ENCODE measurements at regions of chr16 and their contacts with region 1.

Region 1: GRCh38 chr16:69773260-69773947 is 11.3 kb downstream of the WWP2 start:
- DNase-seq: no peak
- ATAC-seq: no peak
- H3K4me3 ChIP-seq: no peak overlapping the region
- H3K4me3 Mint-ChIP-seq: no peak overlapping the region
- H3K27ac ChIP-seq: no peak overlapping the region
- H3K27ac Mint-ChIP-seq: peak overlapping the region; percentile 41
- H3K4me1 ChIP-seq: peaks cover 8% of the 10 kb centered on the region
- H3K4me1 Mint-ChIP-seq: peaks cover 47% of the 10 kb centered on the region
- H3K27me3 ChIP-seq: no peaks in the 10 kb centered on the region
- H3K27me3 Mint-ChIP-seq: no peaks in the 10 kb centered on the region
- CTCF ChIP-seq: no peak

Region 2: GRCh38 chr16:69796351-69797118 is 23.1 kb after region 1 on chr16:
- CTCF ChIA-PET with region 1: interaction called, 10 read pairs
- POLR2A ChIA-PET with region 1: interaction called, 3 read pairs
- intact Hi-C with region 1: no loop called
- DNase-seq: peak in 4 of 9 experiments; percentile 16 to 64 (median 37)
- ATAC-seq: peak; percentile 66
- H3K4me3 ChIP-seq: no peak overlapping the region
- H3K4me3 Mint-ChIP-seq: no peak overlapping the region
- H3K27ac ChIP-seq: no peak overlapping the region
- H3K27ac Mint-ChIP-seq: no peak overlapping the region
- H3K4me1 ChIP-seq: no peaks in the 10 kb centered on the region
- H3K4me1 Mint-ChIP-seq: peaks cover 3% of the 10 kb centered on the region
- H3K27me3 ChIP-seq: no peaks in the 10 kb centered on the region
- H3K27me3 Mint-ChIP-seq: no peaks in the 10 kb centered on the region
- CTCF ChIP-seq: peak; percentile 85

Measured in CD8-positive, alpha-beta T cell (primary cell).